Natural killer cell (primary cell): ENCODE measurements at regions of chr1 and their contacts with region 1.

Region 1: DNA sequence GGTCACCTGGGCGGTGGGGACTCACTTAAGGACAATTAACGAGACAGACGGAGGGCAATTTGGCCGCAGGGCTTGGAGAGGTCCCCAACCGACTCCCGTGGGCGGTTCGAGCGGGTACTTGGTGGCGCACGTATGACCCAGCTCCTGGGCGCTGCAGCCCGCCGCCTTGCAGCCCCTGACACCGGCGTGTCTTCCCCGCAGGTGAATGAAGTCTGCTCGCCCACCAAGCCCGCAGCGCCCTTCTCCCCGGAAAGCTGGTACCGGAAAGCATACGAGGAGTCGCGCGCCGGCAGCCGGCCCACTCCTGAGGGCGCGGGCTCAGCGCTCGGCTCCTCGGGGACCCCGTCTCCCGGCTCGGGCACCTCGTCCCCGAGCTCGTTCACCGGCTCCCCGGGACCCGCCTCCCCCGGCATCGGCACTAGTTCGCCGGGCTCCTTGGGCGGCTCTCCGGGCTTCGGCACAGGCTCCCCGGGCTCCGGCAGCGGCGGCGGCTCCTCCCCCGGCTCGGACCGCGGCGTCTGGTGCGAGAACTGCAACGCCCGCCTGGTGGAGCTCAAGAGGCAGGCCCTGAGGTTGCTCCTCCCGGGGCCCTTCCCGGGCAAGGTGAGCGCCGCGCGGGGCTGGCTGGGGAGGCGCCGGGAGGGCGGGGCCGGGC is 1.4 kb downstream of the KIF26B start:
- DNase-seq: peak; percentile 64 to 79
- ATAC-seq: peak; percentile 75 to 84 (median 78)
- H3K4me3 ChIP-seq: peak overlapping the region; percentile 28
- H3K4me3 Mint-ChIP-seq: peak overlapping the region; percentile 89
- H3K27ac ChIP-seq: no peak overlapping the region
- H3K27ac Mint-ChIP-seq: no peak overlapping the region
- H3K4me1 ChIP-seq: peaks cover 37% of the 10 kb centered on the region
- H3K4me1 Mint-ChIP-seq: peaks cover 13 to 36% of the 10 kb centered on the region in 2 donors
- H3K27me3 ChIP-seq: peaks cover 24% of the 10 kb centered on the region
- H3K27me3 Mint-ChIP-seq: peaks cover 39 to 52% of the 10 kb centered on the region in 2 donors
- CTCF ChIP-seq: peak; percentile 57

Region 2: DNA sequence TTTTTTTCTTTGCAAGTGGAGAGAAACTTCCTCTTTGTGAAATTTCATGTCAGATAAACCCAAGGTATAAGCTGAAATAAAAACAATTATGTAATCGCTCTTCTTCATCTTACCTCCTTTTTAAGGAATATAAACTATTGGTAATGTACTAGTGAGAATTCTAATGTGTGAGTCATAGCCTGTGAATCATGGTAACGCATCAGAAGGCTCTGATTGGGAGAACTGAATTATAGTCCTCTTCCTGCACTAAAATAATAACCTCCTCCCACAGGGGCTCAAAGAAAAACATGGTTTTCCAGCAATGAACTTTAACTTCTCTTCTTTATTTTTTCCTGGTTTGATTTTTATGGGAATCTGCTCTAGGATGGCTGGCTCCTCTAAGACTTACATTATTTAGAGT is 377.8 kb before region 1 on chr1:
- intact Hi-C with region 1: no loop called
- DNase-seq: no peak
- ATAC-seq: no peak
- H3K4me3 ChIP-seq: no peak overlapping the region
- H3K4me3 Mint-ChIP-seq: no peak overlapping the region
- H3K27ac ChIP-seq: no peak overlapping the region
- H3K27ac Mint-ChIP-seq: no peak overlapping the region
- H3K4me1 ChIP-seq: no peaks in the 10 kb centered on the region
- H3K4me1 Mint-ChIP-seq: no peaks in the 10 kb centered on the region
- H3K27me3 ChIP-seq: no peaks in the 10 kb centered on the region
- H3K27me3 Mint-ChIP-seq: no peaks in the 10 kb centered on the region
- CTCF ChIP-seq: no peak

Region 3: DNA sequence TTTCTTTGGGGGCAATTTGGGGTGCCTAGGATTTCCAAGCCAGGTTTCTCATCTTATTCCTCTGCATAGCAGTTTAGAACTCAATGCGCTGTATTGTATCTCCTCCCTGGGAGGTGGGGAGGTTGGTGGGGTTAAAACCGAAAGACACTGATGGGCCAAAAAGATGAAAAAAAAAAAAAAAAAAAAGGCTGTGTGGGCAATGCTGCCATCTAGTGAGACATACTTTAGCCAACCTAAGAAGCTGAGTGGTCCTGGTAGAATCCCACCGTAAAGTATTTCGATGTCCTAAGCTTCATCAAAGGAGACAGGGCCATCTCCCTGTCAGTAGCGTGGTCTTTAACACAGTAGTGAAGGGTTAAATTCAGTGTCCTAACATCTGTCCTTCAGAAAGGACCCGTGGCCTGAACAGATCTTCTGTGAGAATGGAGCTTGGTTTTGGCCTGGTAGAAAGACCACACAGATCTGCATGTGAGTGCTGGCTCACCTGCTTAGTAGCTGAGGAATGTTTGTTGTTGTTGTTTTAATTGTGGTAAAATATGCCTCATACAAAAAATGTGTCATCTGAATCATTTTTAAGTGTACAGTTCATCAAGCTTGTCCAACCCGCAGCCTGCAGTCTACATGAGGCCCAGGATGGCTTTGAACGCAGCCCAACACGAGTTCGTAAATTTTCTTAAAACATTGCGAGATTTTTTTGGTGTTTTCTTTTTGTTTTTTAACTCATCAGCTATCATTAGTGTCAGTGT is 224.8 kb after region 1 on chr1:
- intact Hi-C with region 1: loop called (anchors 10 kb)
- DNase-seq: peak in 1 of 2 donors; percentile 33
- ATAC-seq: no peak
- H3K4me3 ChIP-seq: no peak overlapping the region
- H3K4me3 Mint-ChIP-seq: no peak overlapping the region
- H3K27ac ChIP-seq: no peak overlapping the region
- H3K27ac Mint-ChIP-seq: no peak overlapping the region
- H3K4me1 ChIP-seq: peaks cover 28% of the 10 kb centered on the region
- H3K4me1 Mint-ChIP-seq: peaks cover 24 to 26% of the 10 kb centered on the region in 2 donors
- H3K27me3 ChIP-seq: no peaks in the 10 kb centered on the region
- H3K27me3 Mint-ChIP-seq: peaks cover 5 to 8% of the 10 kb centered on the region in 2 donors
- CTCF ChIP-seq: no peak

Region 4: GRCh38 chr1:245888809-245889208 is 732.6 kb after region 1 on chr1:
- intact Hi-C with region 1: loop called (anchors 10 kb)
- DNase-seq: peak in 1 of 2 donors; percentile 59
- ATAC-seq: peak in 1 of 3 donors; percentile 49
- H3K4me3 ChIP-seq: no peak overlapping the region
- H3K4me3 Mint-ChIP-seq: no peak overlapping the region
- H3K27ac ChIP-seq: no peak overlapping the region
- H3K27ac Mint-ChIP-seq: no peak overlapping the region
- H3K4me1 ChIP-seq: no peaks in the 10 kb centered on the region
- H3K4me1 Mint-ChIP-seq: peaks cover 0 to 6% of the 10 kb centered on the region in 2 donors
- H3K27me3 ChIP-seq: no peaks in the 10 kb centered on the region
- H3K27me3 Mint-ChIP-seq: no peaks in the 10 kb centered on the region
- CTCF ChIP-seq: peak; percentile 49

Region 5: GRCh38 chr1:246002725-246003441 is 846.7 kb after region 1 on chr1:
- intact Hi-C with region 1: loop called (anchors 1 kb)
- DNase-seq: peak; percentile 78 to 90
- ATAC-seq: peak; percentile 80 to 85 (median 85)
- H3K4me3 ChIP-seq: no peak overlapping the region
- H3K4me3 Mint-ChIP-seq: no peak overlapping the region
- H3K27ac ChIP-seq: no peak overlapping the region
- H3K27ac Mint-ChIP-seq: peak overlapping the region in 1 of 2 donors; percentile 56
- H3K4me1 ChIP-seq: no peaks in the 10 kb centered on the region
- H3K4me1 Mint-ChIP-seq: peaks cover 0 to 7% of the 10 kb centered on the region in 2 donors
- H3K27me3 ChIP-seq: no peaks in the 10 kb centered on the region
- H3K27me3 Mint-ChIP-seq: no peaks in the 10 kb centered on the region
- CTCF ChIP-seq: peak; percentile 94

Region 6: GRCh38 chr1:246117066-246117791 is 961.0 kb after region 1 on chr1:
- intact Hi-C with region 1: loop called (anchors 5 kb)
- DNase-seq: peak in 1 of 2 donors; percentile 62
- ATAC-seq: peak; percentile 80 to 90 (median 88)
- H3K4me3 ChIP-seq: no peak overlapping the region
- H3K4me3 Mint-ChIP-seq: peak overlapping the region; percentile 71
- H3K27ac ChIP-seq: no peak overlapping the region
- H3K27ac Mint-ChIP-seq: peak overlapping the region; percentile 26 to 35
- H3K4me1 ChIP-seq: peaks cover 2% of the 10 kb centered on the region
- H3K4me1 Mint-ChIP-seq: peaks cover 6 to 19% of the 10 kb centered on the region in 2 donors
- H3K27me3 ChIP-seq: no peaks in the 10 kb centered on the region
- H3K27me3 Mint-ChIP-seq: peaks cover 0 to 2% of the 10 kb centered on the region in 2 donors
- CTCF ChIP-seq: peak; percentile 58

Region 7: DNA sequence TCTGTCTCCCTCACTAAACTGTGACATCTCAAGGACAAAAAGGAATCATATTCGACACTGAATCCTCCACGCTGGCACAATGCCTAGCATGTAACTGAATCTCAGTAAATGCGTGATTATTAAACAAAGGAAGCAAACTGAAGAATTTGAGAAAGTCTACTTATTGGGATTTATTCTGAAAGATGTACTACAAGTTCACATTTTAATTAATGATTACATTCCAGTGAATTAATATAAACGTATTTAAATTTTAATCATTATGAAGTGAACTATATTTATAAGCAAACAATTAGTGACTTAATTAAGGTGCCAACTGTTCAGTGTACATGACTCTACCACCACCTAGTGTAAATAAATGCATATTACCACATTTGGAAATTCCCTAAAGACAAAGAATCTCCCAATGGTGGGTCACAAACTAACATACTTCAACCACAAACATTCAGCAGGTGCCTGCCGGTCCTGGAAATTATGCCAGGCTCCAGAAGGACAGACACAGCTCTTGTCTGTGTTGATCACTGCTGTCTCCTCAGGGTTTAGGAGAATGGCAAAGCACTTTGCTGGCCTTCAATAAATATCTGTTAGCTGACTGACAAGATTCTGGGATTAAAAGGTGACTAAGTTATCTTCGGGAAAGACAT is 1294.5 kb after region 1 on chr1:
- intact Hi-C with region 1: loop called (anchors 10 kb)
- DNase-seq: peak in 1 of 2 donors; percentile 31
- ATAC-seq: peak in 1 of 3 donors; percentile 65
- H3K4me3 ChIP-seq: no peak overlapping the region
- H3K4me3 Mint-ChIP-seq: no peak overlapping the region
- H3K27ac ChIP-seq: no peak overlapping the region
- H3K27ac Mint-ChIP-seq: no peak overlapping the region
- H3K4me1 ChIP-seq: no peaks in the 10 kb centered on the region
- H3K4me1 Mint-ChIP-seq: peaks cover 8 to 17% of the 10 kb centered on the region in 2 donors
- H3K27me3 ChIP-seq: no peaks in the 10 kb centered on the region
- H3K27me3 Mint-ChIP-seq: no peaks in the 10 kb centered on the region
- CTCF ChIP-seq: peak; percentile 60

Region 8: GRCh38 chr1:246497331-246497915 is 1341.2 kb after region 1 on chr1:
- intact Hi-C with region 1: loop called (anchors 10 kb)
- DNase-seq: peak in 1 of 2 donors; percentile 87
- ATAC-seq: peak; percentile 78 to 93 (median 79)
- H3K4me3 ChIP-seq: no peak overlapping the region
- H3K4me3 Mint-ChIP-seq: no peak overlapping the region
- H3K27ac ChIP-seq: no peak overlapping the region
- H3K27ac Mint-ChIP-seq: peak overlapping the region; percentile 69 to 78
- H3K4me1 ChIP-seq: no peaks in the 10 kb centered on the region
- H3K4me1 Mint-ChIP-seq: peaks cover 14% of the 10 kb centered on the region in 2 donors
- H3K27me3 ChIP-seq: no peaks in the 10 kb centered on the region
- H3K27me3 Mint-ChIP-seq: no peaks in the 10 kb centered on the region
- CTCF ChIP-seq: peak; percentile 82